Adrenal gland (tissue), 19 donors: ENCODE measurements at regions of chr10 and their contacts with region 1.

Region 1: GRCh38 chr10:70272925-70273316 is 10.9 kb downstream of the NPFFR1 start:
- DNase-seq: peak in 1 of 7 donors; percentile 15
- H3K4me3 ChIP-seq: no peak overlapping the region
- H3K27ac ChIP-seq: no peak overlapping the region
- H3K4me1 ChIP-seq: peaks cover 0 to 6% of the 10 kb centered on the region in 2 donors
- H3K27me3 ChIP-seq: no peaks in the 10 kb centered on the region
- CTCF ChIP-seq: peak; percentile 53 to 76 (median 62)
- POLR2A ChIP-seq: no peak

Region 2: GRCh38 chr10:70227548-70228320 is 45.2 kb before region 1 on chr10:
- intact Hi-C with region 1: loop called in 1 of 2 experiments (anchors 10 kb)
- DNase-seq: peak in 2 of 7 donors; percentile 46 to 48
- H3K4me3 ChIP-seq: no peak overlapping the region
- H3K27ac ChIP-seq: peak overlapping the region in 3 of 5 donors; percentile 19 to 56 (median 33)
- H3K4me1 ChIP-seq: peaks cover 5 to 44% of the 10 kb centered on the region in 2 donors
- H3K27me3 ChIP-seq: no peaks in the 10 kb centered on the region
- CTCF ChIP-seq: no peak
- POLR2A ChIP-seq: no peak

Region 3: GRCh38 chr10:70348228-70348850 is 75.4 kb after region 1 on chr10:
- intact Hi-C with region 1: loop called in 1 of 2 experiments (anchors 5 kb)
- DNase-seq: peak in 6 of 7 donors; percentile 28 to 63 (median 42)
- H3K4me3 ChIP-seq: no peak overlapping the region
- H3K27ac ChIP-seq: no peak overlapping the region
- H3K4me1 ChIP-seq: no peaks in the 10 kb centered on the region
- H3K27me3 ChIP-seq: no peaks in the 10 kb centered on the region
- CTCF ChIP-seq: peak; percentile 27 to 55 (median 47)
- POLR2A ChIP-seq: no peak

Region 4: GRCh38 chr10:70363971-70364771 is 91.2 kb after region 1 on chr10:
- intact Hi-C with region 1: loop called in 1 of 2 experiments (anchors 5 kb)
- DNase-seq: peak; percentile 87 to 96 (median 93)
- H3K4me3 ChIP-seq: no peak overlapping the region
- H3K27ac ChIP-seq: peak overlapping the region in 3 of 5 donors; percentile 19 to 81 (median 71)
- H3K4me1 ChIP-seq: peaks cover 0 to 12% of the 10 kb centered on the region in 2 donors
- H3K27me3 ChIP-seq: no peaks in the 10 kb centered on the region
- CTCF ChIP-seq: peak; percentile 83 to 98 (median 95)
- POLR2A ChIP-seq: no peak

Region 5: DNA sequence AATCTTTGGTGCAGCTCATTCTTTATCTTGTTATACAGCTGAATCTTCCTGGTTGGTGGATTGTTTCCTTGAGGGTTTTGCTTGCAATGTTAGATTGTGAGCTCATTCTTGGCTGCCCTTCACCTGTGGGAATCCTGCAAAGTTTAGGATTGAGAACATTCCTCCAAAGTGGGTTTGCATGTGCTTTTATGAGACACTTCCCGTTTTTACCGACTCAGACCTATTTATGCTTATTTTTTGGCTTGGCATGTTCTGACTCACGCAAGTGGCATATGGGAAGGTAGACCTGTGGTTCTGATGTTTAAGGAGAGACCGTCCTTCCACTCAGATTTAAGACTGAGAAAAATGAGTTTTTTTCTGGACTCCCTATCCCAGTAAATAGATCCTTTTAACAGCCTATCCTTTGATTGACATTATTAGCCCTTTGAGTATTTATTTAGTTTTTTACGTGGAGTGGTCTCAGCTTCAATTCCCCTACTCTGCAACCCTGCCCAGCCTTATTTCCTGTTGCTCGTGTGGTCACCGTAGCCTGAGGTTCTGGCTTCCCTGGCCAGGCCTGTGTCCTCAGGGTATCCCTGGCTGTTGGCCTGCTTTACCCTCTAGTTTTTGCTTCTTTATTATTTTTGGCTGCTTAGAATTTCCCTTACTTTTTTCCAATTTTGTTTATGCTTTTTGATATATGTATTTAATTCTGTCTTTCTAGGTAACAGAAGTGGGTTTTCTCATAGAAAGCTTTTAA is 343.0 kb after region 1 on chr10:
- intact Hi-C with region 1: no loop called
- DNase-seq: no peak
- H3K4me3 ChIP-seq: no peak overlapping the region
- H3K27ac ChIP-seq: no peak overlapping the region
- H3K4me1 ChIP-seq: no peaks in the 10 kb centered on the region
- H3K27me3 ChIP-seq: no peaks in the 10 kb centered on the region
- CTCF ChIP-seq: no peak
- POLR2A ChIP-seq: no peak